Activated CD8-positive, alpha-beta T cell treated with anti-CD3 and anti-CD28 coated beads, Interleukin-2, amount 10 ng/mL, durations not matched to agents 7 days and 5 days (primary cell): ENCODE measurements at regions of chr4 and their contacts with region 1.

Region 1: GRCh38 chr4:40325189-40326019 is 9.7 kb upstream of the CHRNA9 start:
- DNase-seq: peak; percentile 80
- ATAC-seq: peak; percentile 98
- H3K4me3 Mint-ChIP-seq: no peak overlapping the region
- H3K27ac Mint-ChIP-seq: peak overlapping the region; percentile 50
- H3K4me1 Mint-ChIP-seq: peaks cover 37% of the 10 kb centered on the region
- H3K27me3 Mint-ChIP-seq: no peaks in the 10 kb centered on the region

Region 2: GRCh38 chr4:40056716-40057585 is 268.5 kb before region 1 on chr4 and contains the start of gene N4BP2:
- CTCF ChIA-PET with region 1: interaction called, 17 read pairs
- POLR2A ChIA-PET with region 1: interaction called, 5 read pairs
- DNase-seq: peak; percentile 80
- ATAC-seq: peak; percentile 49
- H3K4me3 Mint-ChIP-seq: peak within 1 kb of the TSS; percentile 93
- H3K27ac Mint-ChIP-seq: peak within 1 kb of the TSS; percentile 96
- H3K4me1 Mint-ChIP-seq: peaks cover 37% of the 10 kb centered on the region
- H3K27me3 Mint-ChIP-seq: peaks cover 8% of the 10 kb centered on the region
- total RNA-seq, gene N4BP2: 25.1 to 29.0 TPM

Region 3: GRCh38 chr4:40152637-40153036 is 172.8 kb before region 1 on chr4:
- CTCF ChIA-PET with region 1: interaction called, 22 read pairs
- POLR2A ChIA-PET with region 1: no interaction called
- DNase-seq: no peak
- ATAC-seq: peak; percentile 48
- H3K4me3 Mint-ChIP-seq: peak overlapping the region; percentile 10
- H3K27ac Mint-ChIP-seq: no peak overlapping the region
- H3K4me1 Mint-ChIP-seq: peaks cover 28% of the 10 kb centered on the region
- H3K27me3 Mint-ChIP-seq: no peaks in the 10 kb centered on the region

Region 4: GRCh38 chr4:40340030-40340429 is 14.6 kb after region 1 on chr4:
- CTCF ChIA-PET with region 1: interaction called, 21 read pairs
- POLR2A ChIA-PET with region 1: no interaction called
- DNase-seq: no peak
- ATAC-seq: no peak
- H3K4me3 Mint-ChIP-seq: no peak overlapping the region
- H3K27ac Mint-ChIP-seq: no peak overlapping the region
- H3K4me1 Mint-ChIP-seq: peaks cover 20% of the 10 kb centered on the region
- H3K27me3 Mint-ChIP-seq: peaks cover 5% of the 10 kb centered on the region